ENCODE measurements at regions of chr1 and their contacts with region 1.

Region 1: GRCh38 chr1:45339789-45340570 is at the starts of genes MUTYH and TOE1:
- DNase-seq: peak; percentile 96
- ATAC-seq: peak; percentile 87
- H3K4me3 Mint-ChIP-seq: peak within 1 kb of the TSS; percentile 98
- H3K27ac Mint-ChIP-seq: peak within 1 kb of the TSS; percentile 98
- H3K4me1 Mint-ChIP-seq: peaks cover 35% of the 10 kb centered on the region
- H3K27me3 Mint-ChIP-seq: no peaks in the 10 kb centered on the region
- total RNA-seq, gene MUTYH: 59.9 to 68.8 TPM
- total RNA-seq, gene TOE1: 20.4 to 22.2 TPM

Region 2: DNA sequence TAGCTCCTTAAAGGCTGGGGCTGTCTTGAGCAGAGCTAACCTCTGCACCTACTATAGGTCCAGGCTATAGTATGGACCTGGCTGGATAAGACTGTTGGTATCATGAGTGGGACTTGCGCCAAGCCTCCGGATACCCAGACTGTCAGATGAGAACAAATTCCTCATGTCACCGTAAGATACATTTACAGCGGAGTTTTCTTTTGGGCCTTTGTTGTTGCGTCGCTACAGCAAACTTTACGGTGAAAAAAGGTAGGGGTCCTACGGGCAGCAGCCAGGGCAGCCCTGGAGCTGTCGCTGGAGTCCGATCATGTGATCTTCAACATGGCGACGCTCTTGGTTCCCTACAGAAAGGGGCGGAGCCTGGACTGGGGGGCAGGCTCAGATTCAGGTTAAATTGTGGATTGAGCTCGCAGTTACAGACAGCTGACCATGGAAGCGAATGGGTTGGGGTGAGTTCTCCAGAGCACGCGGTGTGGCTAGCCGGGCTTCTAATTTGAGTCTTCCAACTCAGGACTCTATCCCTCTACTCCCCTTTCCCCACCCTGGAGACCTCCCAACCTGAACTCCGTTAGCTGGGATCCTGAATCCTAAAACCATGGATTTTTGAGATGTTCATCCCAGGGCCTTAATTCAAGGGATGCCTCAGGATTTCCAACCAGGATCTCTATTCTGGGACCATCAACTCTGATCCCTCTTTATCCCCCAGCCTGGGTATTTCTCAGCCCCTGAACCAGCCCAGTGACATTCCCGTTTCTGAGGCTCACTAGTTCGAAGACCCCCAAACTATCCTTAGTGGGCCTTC is 327.9 kb before region 1 on chr1 and contains the start of gene UROD:
- POLR2A ChIA-PET with region 1: interaction called, 31 read pairs
- DNase-seq: peak; percentile 86
- ATAC-seq: peak; percentile 71
- H3K4me3 Mint-ChIP-seq: peak within 1 kb of the TSS; percentile 89
- H3K27ac Mint-ChIP-seq: peak within 1 kb of the TSS; percentile 97
- H3K4me1 Mint-ChIP-seq: peaks cover 29% of the 10 kb centered on the region
- H3K27me3 Mint-ChIP-seq: no peaks in the 10 kb centered on the region
- total RNA-seq, gene UROD: 71.7 to 79.2 TPM

Region 3: DNA sequence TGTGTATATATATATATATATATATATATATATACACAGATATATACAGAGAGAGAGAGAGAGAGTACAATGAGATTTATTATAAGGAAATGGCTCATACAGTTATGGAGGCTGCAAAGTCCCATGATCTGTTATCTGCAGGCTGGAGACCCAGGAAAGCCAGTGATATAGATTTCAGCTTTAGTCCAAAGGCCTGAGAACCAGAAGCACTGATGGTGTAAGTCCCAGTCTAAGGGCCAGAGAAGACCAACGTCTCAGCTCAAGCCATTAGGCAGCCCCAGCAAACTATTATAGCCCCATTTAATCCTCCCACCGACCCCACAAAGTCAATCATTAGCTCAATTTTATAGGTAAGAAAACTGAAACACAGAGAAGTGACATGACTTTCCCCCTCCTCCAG is 48.3 kb before region 1 on chr1:
- POLR2A ChIA-PET with region 1: no interaction called
- DNase-seq: no peak
- ATAC-seq: no peak
- H3K4me3 Mint-ChIP-seq: no peak overlapping the region
- H3K27ac Mint-ChIP-seq: no peak overlapping the region
- H3K4me1 Mint-ChIP-seq: peaks cover 2% of the 10 kb centered on the region
- H3K27me3 Mint-ChIP-seq: no peaks in the 10 kb centered on the region

Region 4: DNA sequence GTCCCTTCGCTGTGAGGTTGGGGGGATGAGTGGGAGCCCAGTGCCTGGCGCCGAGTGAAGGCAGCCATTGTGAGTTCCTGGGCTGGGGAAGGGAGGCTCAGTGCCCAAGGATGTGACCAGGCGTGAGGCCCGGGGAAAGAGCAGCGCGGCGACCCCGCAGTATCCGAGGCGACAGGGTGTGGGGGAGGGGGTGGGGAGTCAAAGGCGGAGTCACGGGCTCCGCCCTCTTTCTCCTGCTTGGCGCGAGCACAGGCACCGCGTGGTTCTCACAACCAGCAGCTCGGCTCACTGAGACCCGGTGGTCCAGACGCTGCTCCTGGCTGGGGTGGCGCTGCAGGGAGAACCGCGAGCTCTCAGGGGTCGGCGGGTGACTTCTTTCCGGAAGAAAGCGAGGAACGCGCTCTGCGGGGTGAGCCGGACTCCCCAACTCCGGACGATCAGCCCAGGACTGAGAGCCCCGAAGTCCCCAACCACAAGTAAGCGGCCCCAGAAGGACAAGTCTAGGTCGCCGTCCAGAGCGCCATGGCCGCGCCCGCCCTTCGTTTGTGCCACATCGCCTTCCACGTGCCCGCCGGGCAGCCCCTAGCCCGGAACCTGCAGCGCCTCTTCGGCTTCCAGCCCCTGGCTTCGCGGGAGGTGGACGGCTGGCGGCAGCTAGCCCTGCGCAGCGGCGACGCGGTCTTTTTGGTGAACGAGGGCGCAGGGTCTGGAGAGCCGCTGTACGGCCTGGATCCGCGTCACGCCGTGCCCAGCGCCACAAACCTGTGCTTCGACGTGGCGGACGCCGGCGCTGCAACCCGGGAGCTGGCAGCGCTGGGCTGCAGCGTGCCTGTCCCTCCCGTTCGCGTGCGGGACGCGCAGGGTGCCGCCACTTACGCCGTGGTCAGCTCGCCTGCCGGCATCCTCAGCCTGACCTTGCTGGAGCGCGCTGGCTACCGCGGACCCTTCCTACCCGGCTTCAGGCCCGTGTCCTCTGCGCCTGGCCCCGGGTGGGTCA is 13.1 kb before region 1 on chr1 and contains the start of gene HPDL:
- POLR2A ChIA-PET with region 1: interaction called, 94 read pairs
- DNase-seq: peak; percentile 77
- ATAC-seq: peak; percentile 83
- H3K4me3 Mint-ChIP-seq: peak within 1 kb of the TSS; percentile 82
- H3K27ac Mint-ChIP-seq: peak within 1 kb of the TSS; percentile 81
- H3K4me1 Mint-ChIP-seq: peaks cover 16% of the 10 kb centered on the region
- H3K27me3 Mint-ChIP-seq: peaks cover 4% of the 10 kb centered on the region
- total RNA-seq, gene HPDL: 8.4 to 10.3 TPM

Region 5: DNA sequence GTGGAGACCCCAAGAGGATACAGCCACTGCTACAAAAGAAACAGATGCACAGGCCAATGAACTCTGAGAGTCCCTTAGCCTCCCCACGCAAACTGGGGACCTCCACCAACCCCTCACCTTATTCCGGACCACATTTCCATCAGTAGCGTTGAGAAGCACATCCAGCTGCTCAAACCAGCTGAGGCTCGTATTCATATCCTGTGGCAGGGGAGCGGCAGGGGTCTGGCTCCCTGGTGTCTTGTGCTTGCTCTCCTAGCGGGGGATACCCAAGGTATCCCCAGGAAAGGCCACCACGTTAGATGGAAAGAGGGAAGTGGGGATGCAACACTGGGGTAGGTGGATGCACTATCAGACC is 159.4 kb after region 1 on chr1:
- POLR2A ChIA-PET with region 1: interaction called, 21 read pairs
- DNase-seq: no peak
- ATAC-seq: no peak
- H3K4me3 Mint-ChIP-seq: peak overlapping the region; percentile 94
- H3K27ac Mint-ChIP-seq: peak overlapping the region; percentile 94
- H3K4me1 Mint-ChIP-seq: peaks cover 24% of the 10 kb centered on the region
- H3K27me3 Mint-ChIP-seq: no peaks in the 10 kb centered on the region

Region 6: GRCh38 chr1:45550401-45551351 is 210.7 kb after region 1 on chr1 and contains the start of gene AKR1A1:
- POLR2A ChIA-PET with region 1: interaction called, 11 read pairs
- DNase-seq: peak; percentile 94
- ATAC-seq: peak; percentile 92
- H3K4me3 Mint-ChIP-seq: peak within 1 kb of the TSS; percentile 94
- H3K27ac Mint-ChIP-seq: peak within 1 kb of the TSS; percentile 89
- H3K4me1 Mint-ChIP-seq: peaks cover 16% of the 10 kb centered on the region
- H3K27me3 Mint-ChIP-seq: peaks cover 8% of the 10 kb centered on the region
- total RNA-seq, gene AKR1A1: 102 to 116 TPM